ENCODE measurements at regions of chr10 and their contacts with region 1.

Region 1: GRCh38 chr10:5094265-5095205 is at the start of gene AKR1C3:
- DNase-seq: no peak
- ATAC-seq: peak; percentile 55
- H3K4me3 Mint-ChIP-seq: peak within 1 kb of the TSS; percentile 39
- H3K27ac Mint-ChIP-seq: no peak within 1 kb of the TSS
- H3K4me1 Mint-ChIP-seq: peaks cover 8% of the 10 kb centered on the region
- H3K27me3 Mint-ChIP-seq: peaks cover 11% of the 10 kb centered on the region
- total RNA-seq, gene AKR1C3: 0.19 to 0.75 TPM

Region 2: GRCh38 chr10:4819707-4820106 is 274.8 kb before region 1 on chr10:
- CTCF ChIA-PET with region 1: interaction called, 4 read pairs
- POLR2A ChIA-PET with region 1: no interaction called
- intact Hi-C with region 1: loop called in 1 of 2 experiments (anchors 5 kb)
- DNase-seq: no peak
- ATAC-seq: no peak
- H3K4me3 Mint-ChIP-seq: no peak overlapping the region
- H3K27ac Mint-ChIP-seq: no peak overlapping the region
- H3K4me1 Mint-ChIP-seq: no peaks in the 10 kb centered on the region
- H3K27me3 Mint-ChIP-seq: peaks cover 6% of the 10 kb centered on the region

Region 3: GRCh38 chr10:5283305-5284158 is 189.0 kb after region 1 on chr10:
- CTCF ChIA-PET with region 1: interaction called, 3 read pairs
- POLR2A ChIA-PET with region 1: no interaction called
- intact Hi-C with region 1: loop called in 1 of 2 experiments (anchors 1 kb)
- DNase-seq: peak; percentile 78
- ATAC-seq: peak; percentile 83
- H3K4me3 Mint-ChIP-seq: no peak overlapping the region
- H3K27ac Mint-ChIP-seq: peak overlapping the region; percentile 74
- H3K4me1 Mint-ChIP-seq: peaks cover 21% of the 10 kb centered on the region
- H3K27me3 Mint-ChIP-seq: peaks cover 7% of the 10 kb centered on the region

Region 4: DNA sequence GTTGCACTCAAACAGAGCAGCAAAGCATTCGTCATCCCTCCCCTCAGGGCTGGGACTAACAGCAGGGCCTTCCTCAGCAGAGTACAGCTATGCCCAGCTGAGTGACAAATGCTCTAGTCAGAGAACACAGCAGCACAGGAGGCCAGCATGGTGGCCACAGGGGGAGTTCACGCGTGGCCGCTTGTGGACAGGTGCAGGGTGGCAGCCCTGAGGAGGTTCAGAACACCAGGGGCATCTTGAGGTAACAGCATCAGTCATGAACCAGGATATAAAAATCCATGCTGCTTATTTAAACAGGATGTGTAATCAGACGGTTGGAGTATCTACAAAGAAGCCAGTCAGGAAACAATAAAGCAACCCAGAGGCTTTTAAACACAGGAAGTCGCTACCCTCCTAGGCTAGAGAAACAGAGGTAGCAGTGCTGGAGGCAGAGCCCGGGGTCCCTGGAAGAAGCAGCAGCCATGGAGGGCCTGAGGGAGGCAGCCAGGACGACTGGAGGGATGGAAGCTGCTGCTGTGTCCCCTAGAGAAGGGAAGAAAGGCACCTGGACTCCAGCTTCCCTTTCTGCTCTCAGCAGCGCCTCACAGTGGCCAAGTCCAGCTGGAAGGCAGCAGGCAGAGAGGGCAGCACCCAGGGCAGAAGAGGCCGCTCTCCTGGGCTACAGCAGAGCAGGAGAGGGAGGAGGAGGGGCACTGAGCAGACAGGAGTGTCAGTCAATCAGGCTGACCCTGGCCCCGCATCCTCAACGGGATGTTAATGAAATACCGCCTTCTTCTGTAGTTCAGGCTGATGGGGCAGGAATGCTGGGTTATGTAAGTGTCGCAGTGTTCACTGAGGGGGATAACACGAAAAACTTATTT is 199.4 kb after region 1 on chr10:
- CTCF ChIA-PET with region 1: no interaction called
- POLR2A ChIA-PET with region 1: no interaction called
- intact Hi-C with region 1: loop called in 1 of 2 experiments (anchors 10 kb)
- DNase-seq: peak; percentile 88
- ATAC-seq: peak; percentile 62
- H3K4me3 Mint-ChIP-seq: peak overlapping the region; percentile 76
- H3K27ac Mint-ChIP-seq: peak overlapping the region; percentile 98
- H3K4me1 Mint-ChIP-seq: peaks cover 72% of the 10 kb centered on the region
- H3K27me3 Mint-ChIP-seq: no peaks in the 10 kb centered on the region

Region 5: GRCh38 chr10:5385224-5385623 is 290.7 kb after region 1 on chr10:
- CTCF ChIA-PET with region 1: interaction called, 3 read pairs
- POLR2A ChIA-PET with region 1: no interaction called
- intact Hi-C with region 1: loop called in 1 of 2 experiments (anchors 5 kb)
- DNase-seq: no peak
- ATAC-seq: no peak
- H3K4me3 Mint-ChIP-seq: no peak overlapping the region
- H3K27ac Mint-ChIP-seq: no peak overlapping the region
- H3K4me1 Mint-ChIP-seq: no peaks in the 10 kb centered on the region
- H3K27me3 Mint-ChIP-seq: peaks cover 4% of the 10 kb centered on the region